Activated T-helper 1 cell treated with anti-CD3 and anti-CD28 coated beads, Interleukin-12 subunit alpha, Interleukin-12 subunit beta, Interleukin-2, Interleukin-4 antibody, amounts not matched to agents 30 ng/mL and 10 ng/mL and 1 ng/mL, durations not matched to agents 14 hours and 24 hours and 36 hours (primary cell): ENCODE measurements at regions of chr10 and their contacts with region 1.

Region 1: DNA sequence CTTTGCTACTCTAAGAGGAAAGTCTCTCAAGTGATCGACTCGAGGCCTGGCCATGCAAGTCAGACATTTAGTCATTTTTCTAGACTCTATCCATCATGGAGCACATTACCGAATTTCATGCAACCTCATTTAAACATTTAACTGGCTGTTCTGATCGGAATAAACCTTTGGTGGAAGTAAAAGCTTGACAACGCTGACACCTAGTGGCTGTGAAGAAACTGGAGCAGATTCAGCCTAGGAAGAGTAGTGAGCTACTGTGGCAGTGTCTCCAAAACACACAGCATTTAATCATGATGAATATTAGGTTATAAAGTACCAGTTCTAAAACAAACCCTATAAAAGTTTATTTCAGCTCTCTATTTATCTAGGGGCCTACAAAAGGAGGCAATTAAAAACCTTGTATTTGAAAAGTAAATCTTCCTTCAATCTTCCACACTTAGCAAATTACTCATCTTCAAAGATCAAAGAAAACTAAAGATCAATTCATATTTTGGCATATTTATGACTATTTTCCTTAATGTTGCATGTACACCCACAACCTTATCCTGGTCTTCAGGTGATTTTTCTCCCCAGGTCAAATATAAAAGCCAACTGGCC is 175.0 kb downstream of the CTNNA3 start:
- DNase-seq: peak; percentile 9
- H3K4me3 Mint-ChIP-seq: no peak overlapping the region
- H3K27ac Mint-ChIP-seq: no peak overlapping the region
- H3K4me1 Mint-ChIP-seq: peaks cover 7% of the 10 kb centered on the region
- H3K27me3 Mint-ChIP-seq: peaks cover 9% of the 10 kb centered on the region

Region 2: GRCh38 chr10:66586073-66586472 is 934.9 kb before region 1 on chr10:
- intact Hi-C with region 1: no loop called
- DNase-seq: no peak
- H3K4me3 Mint-ChIP-seq: no peak overlapping the region
- H3K27ac Mint-ChIP-seq: no peak overlapping the region
- H3K4me1 Mint-ChIP-seq: no peaks in the 10 kb centered on the region
- H3K27me3 Mint-ChIP-seq: no peaks in the 10 kb centered on the region

Region 3: DNA sequence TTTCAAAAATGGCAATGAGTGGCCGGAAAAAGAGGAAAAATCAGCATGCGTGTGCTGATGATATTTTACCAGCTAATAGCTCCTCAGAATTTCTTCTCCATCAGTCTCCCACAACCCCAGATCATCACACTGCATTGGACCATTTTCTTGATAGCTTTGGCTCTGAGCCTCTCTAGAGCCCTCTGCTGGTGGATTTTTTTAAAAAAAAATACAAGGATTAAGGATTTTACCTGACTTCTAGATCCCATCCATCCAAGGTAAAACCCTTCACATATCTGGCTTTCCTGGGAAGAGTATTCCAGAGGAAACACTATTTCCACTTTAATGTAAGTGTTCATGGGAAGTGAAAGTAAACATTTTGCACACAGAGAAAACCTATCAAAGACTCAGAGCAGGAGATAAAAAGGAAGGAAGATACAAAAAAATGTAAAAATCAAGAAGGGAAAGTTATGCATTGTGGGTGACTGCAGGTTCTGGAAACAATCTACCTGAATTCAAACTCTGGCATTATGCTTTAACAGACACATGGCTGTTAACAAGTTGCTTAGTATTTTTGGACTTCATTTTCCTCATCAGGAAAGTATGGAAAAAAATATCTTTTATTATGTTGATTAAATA is 214.3 kb before region 1 on chr10:
- intact Hi-C with region 1: loop called (anchors 1 kb)
- DNase-seq: no peak
- H3K4me3 Mint-ChIP-seq: no peak overlapping the region
- H3K27ac Mint-ChIP-seq: no peak overlapping the region
- H3K4me1 Mint-ChIP-seq: no peaks in the 10 kb centered on the region
- H3K27me3 Mint-ChIP-seq: peaks cover 2% of the 10 kb centered on the region